Activated CD8-positive, alpha-beta T cell treated with anti-CD3 and anti-CD28 coated beads, Interleukin-2, amount 10 ng/mL, durations not matched to agents 7 days and 5 days (primary cell): ENCODE measurements at regions of chr3 and their contacts with region 1.

Region 1: DNA sequence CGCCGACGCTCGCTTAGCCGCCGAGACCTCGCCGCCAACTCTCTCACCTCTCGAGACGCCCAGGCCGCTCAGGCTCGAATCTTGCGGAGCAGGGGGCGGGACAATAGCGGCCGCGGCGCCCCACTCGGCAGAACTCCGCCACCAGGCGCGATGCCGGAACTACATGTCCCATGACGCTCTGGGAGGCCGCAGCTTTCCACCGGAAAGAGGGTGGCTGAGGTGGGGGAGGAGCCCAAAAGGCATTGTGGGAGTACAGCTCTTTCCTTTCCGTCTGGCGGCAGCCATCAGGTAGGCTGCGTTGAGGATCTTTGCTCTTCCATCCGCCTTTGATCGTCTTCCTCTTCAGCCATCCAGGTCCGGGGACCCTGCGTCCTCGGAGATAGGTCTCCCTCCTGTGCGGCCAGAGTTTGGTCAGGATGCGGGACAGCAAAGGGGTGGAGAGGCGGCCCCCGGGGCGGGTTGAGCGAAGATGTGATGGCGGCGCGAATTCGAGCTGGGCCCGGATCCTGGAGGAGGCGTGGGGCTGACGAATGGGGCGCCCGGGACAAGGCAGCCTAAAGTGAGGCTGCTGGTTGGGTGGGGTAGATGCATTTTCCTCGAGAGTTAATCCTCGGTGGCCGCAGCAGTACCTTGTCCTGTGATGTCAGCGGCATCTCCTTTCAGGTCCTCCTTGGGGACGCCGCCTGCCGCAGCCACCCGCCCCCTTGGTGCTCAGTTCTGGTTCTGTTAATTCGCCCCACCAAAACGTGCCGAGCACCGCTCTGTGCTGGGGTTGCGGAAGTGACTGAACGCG is at the starts of genes NKIRAS1 and RPL15:
- DNase-seq: peak; percentile 98
- ATAC-seq: peak; percentile 94
- H3K4me3 Mint-ChIP-seq: peak within 1 kb of the TSS; percentile 99
- H3K27ac Mint-ChIP-seq: peak within 1 kb of the TSS; percentile 98
- H3K4me1 Mint-ChIP-seq: peaks cover 45% of the 10 kb centered on the region
- H3K27me3 Mint-ChIP-seq: peaks cover 5% of the 10 kb centered on the region
- total RNA-seq, gene NKIRAS1: 2.2 to 3.1 TPM
- total RNA-seq, gene RPL15: 1,496 to 1,569 TPM

Region 2: DNA sequence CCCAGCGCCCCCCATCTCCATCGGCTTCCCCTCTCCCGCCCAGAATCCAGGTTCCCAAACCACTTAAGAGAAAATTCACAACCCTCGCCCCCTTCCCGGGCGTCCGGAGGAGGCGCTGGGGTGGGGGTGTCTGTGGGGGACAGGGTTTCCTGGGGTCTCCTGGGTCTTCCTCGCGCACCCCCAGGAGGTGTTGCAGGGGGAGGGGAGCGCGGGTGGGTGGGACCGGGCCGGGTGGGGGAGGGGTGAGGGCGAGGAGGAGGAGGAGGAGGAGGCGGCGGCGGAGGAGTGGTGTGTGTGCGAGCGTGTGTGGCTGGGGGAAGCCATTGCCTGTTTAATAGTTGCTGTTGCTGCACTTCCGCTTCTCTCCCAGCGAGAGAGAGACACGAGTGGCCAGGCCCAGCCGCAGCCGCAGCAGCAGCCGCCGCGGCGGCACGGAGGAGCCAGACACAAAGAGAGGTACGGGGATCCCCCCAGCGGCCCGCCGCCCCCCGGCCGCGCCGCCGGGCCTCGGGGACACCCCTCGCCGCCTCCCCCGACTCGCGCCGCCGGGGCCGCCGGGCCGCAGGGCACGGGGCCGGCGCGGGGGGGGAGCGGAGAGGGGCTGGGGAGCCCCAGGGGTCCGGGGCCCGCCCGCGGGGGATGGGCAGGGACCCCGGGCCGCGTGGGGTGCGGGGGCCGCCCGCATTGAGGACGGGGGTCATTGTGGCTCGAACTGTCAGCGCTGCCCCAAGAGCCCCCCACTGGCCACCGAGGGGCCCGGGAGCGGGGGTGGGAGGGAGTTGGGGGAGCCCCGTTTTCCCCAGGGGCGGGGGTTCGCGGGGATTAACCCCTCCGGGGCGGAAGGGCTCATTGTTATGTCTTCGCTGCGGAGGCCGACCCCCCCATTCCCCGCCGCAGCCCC is 111.2 kb before region 1 on chr3 and contains the start of gene UBE2E1:
- CTCF ChIA-PET with region 1: no interaction called
- POLR2A ChIA-PET with region 1: interaction called, 60 read pairs
- DNase-seq: peak; percentile 81
- ATAC-seq: peak; percentile 82
- H3K4me3 Mint-ChIP-seq: peak within 1 kb of the TSS; percentile 92
- H3K27ac Mint-ChIP-seq: peak within 1 kb of the TSS; percentile 94
- H3K4me1 Mint-ChIP-seq: peaks cover 39% of the 10 kb centered on the region
- H3K27me3 Mint-ChIP-seq: peaks cover 18% of the 10 kb centered on the region
- total RNA-seq, gene UBE2E1: 54.0 to 54.9 TPM

Region 3: GRCh38 chr3:23834082-23834870 is 82.8 kb before region 1 on chr3:
- CTCF ChIA-PET with region 1: interaction called, 4 read pairs
- POLR2A ChIA-PET with region 1: interaction called, 11 read pairs
- DNase-seq: no peak
- ATAC-seq: no peak
- H3K4me3 Mint-ChIP-seq: no peak overlapping the region
- H3K27ac Mint-ChIP-seq: no peak overlapping the region
- H3K4me1 Mint-ChIP-seq: peaks cover 18% of the 10 kb centered on the region
- H3K27me3 Mint-ChIP-seq: no peaks in the 10 kb centered on the region

Region 4: GRCh38 chr3:23859016-23859743 is 57.9 kb before region 1 on chr3:
- CTCF ChIA-PET with region 1: interaction called, 4 read pairs
- POLR2A ChIA-PET with region 1: interaction called, 14 read pairs
- DNase-seq: no peak
- ATAC-seq: no peak
- H3K4me3 Mint-ChIP-seq: no peak overlapping the region
- H3K27ac Mint-ChIP-seq: no peak overlapping the region
- H3K4me1 Mint-ChIP-seq: peaks cover 37% of the 10 kb centered on the region
- H3K27me3 Mint-ChIP-seq: no peaks in the 10 kb centered on the region

Region 5: GRCh38 chr3:23888617-23889228 is 28.4 kb before region 1 on chr3:
- CTCF ChIA-PET with region 1: interaction called, 10 read pairs
- POLR2A ChIA-PET with region 1: interaction called, 28 read pairs
- DNase-seq: no peak
- ATAC-seq: no peak
- H3K4me3 Mint-ChIP-seq: no peak overlapping the region
- H3K27ac Mint-ChIP-seq: no peak overlapping the region
- H3K4me1 Mint-ChIP-seq: no peaks in the 10 kb centered on the region
- H3K27me3 Mint-ChIP-seq: no peaks in the 10 kb centered on the region

Region 6: DNA sequence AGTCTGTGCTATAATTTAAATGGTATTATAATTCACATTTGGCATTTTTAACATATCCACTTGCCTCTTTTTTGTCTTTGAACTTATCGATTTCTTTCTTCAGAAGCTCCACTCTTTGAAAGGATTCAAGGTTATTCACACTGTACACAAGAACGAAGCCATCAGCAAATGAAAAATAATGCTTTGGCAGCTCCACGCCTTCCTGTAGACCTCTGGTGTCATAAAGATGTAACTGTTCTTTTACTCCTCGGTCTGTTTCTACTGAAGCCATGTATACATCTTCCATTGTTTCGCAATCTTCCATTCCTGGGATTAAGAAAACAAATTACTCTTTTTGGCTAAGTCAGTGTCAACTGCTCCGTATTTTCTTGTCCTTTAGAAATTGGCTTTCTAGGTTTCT is 16.3 kb before region 1 on chr3:
- CTCF ChIA-PET with region 1: no interaction called
- POLR2A ChIA-PET with region 1: interaction called, 28 read pairs
- DNase-seq: no peak
- ATAC-seq: no peak
- H3K4me3 Mint-ChIP-seq: no peak overlapping the region
- H3K27ac Mint-ChIP-seq: no peak overlapping the region
- H3K4me1 Mint-ChIP-seq: no peaks in the 10 kb centered on the region
- H3K27me3 Mint-ChIP-seq: no peaks in the 10 kb centered on the region

Region 7: DNA sequence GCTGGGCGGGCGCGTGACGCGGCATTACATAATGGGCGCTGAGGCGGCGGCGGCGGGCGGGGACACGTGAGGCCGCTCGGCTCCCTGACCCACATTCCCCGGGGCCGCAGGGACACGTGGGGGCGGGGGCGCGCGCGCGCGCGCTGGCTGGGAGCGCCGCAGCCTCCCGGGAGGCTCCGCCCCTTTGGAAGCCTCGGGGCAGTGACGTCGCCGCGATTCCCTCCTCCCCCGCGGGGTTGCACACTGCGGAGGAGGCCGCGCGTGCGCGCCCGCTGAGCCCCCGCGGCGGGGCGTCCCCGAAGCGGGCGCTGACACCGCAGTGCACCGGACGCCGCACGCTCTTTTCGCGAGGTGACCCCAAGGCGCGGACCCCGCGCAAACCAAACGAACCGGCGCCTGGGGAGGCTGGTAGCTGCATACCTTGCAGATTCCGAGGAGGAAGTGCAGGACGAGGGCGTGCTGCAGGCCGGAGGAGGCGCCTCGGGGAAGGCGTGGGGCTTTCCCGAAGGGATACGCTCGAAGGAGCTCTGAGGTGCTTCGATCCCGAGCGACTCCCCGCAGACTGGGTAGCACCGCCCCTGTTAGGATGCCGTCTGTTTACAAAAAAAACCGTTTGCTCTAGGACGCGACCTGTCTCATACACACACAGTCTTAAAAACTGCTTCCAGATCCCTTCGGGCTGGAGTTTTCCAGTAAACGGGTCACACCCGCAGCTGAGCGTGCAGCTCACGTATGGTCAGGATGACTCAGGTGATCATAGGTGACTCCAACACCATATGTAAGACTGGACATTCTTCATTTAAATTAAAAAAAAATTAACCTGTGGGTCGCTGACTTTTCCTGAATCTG is 29.0 kb after region 1 on chr3:
- CTCF ChIA-PET with region 1: interaction called, 4 read pairs
- POLR2A ChIA-PET with region 1: interaction called, 136 read pairs
- DNase-seq: peak; percentile 94
- ATAC-seq: peak; percentile 82
- H3K4me3 Mint-ChIP-seq: peak overlapping the region; percentile 81
- H3K27ac Mint-ChIP-seq: peak overlapping the region; percentile 90
- H3K4me1 Mint-ChIP-seq: peaks cover 31% of the 10 kb centered on the region
- H3K27me3 Mint-ChIP-seq: peaks cover 24% of the 10 kb centered on the region